ENCODE measurements at regions of chr1 and their contacts with region 1.

Region 1: DNA sequence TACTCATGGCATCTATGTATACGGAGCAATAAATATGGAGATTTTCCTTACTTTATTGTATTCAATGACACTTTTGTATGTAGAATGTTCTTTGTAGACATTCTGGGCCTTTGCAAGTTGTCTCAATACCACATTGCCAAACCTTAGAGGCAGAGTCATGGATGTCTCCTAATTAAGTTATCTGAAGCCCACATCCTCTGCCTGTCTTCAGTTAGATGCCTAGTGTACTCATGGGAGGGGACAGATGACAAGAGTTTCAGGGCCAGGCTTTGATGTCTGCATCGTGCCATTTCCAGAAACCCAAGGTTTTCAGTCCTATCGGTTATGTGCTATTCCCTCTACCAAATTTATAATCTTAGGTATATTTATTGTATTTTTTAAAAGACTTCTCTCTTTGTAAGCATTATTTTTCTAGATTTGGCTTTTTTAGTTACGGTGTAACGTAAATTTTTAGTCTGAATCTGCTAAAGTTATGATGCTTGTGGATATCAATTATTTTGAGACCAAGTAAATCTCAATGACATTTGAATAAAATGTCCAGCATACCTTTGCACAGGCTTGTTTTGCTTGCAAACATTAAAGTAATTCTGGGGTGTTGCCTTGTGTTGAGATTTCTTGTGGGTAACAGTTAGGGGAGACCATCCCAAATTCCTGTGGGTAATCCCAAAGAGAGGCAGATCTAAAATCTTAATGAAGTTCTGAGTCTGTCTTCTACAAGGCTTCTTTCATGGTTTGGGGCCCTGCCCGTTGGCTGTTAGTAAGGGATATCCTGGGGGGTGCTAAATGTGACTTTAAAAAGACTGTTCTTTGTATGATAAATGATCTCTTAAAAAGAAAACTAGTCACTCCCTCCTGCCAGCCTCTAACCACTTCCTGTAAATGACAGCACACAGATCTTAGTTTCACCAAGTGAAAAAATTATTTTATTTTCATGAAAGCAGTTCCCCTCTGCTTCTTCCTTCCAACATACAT is 8.0 kb upstream of the MACF1 start:
- DNase-seq: peak; percentile 73
- H3K4me3 Mint-ChIP-seq: peak overlapping the region; percentile 67
- H3K27ac Mint-ChIP-seq: peak overlapping the region; percentile 99
- H3K4me1 Mint-ChIP-seq: peaks cover 76% of the 10 kb centered on the region
- H3K27me3 Mint-ChIP-seq: no peaks in the 10 kb centered on the region

Region 2: GRCh38 chr1:39105061-39105840 is 91.3 kb before region 1 on chr1:
- CTCF ChIA-PET with region 1: interaction called, 71 read pairs
- POLR2A ChIA-PET with region 1: no interaction called
- DNase-seq: peak; percentile 70
- H3K4me3 Mint-ChIP-seq: peak overlapping the region; percentile 68
- H3K27ac Mint-ChIP-seq: no peak overlapping the region
- H3K4me1 Mint-ChIP-seq: peaks cover 34% of the 10 kb centered on the region
- H3K27me3 Mint-ChIP-seq: peaks cover 14% of the 10 kb centered on the region

Region 3: DNA sequence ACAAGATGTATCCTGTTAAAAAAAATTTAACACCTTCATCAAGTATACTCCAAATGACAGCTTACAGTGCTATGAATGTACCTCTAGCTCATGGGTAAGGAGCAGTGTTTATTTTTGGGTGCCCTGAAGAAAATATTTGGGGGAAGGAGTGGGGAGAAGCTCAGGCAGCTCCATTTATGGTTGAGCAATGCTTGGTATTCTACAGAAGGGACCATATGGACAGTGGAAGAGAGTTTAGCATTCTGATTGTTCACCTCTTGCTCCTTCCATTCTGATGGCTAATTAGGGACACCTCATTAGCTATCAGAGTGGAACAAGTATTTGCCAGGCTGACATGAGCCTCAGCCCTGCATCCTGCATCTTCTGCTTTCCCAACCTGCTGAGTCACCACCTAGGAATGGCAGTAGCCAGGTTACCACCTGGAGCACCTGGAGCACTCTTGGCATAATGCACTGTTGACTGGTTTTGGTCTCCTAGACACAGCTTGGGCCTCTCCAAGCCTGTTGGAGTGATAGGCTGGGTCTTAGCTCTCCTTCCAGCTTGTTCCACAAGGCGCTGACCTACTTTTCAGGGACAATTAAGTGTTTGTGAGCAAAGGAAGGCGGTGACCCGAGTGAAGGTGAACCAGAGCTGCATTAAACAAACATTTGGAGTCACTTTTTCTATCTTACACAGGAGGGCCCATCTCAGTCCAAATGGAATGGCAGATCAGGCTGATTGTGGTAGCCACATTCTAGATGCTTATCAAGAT is 54.0 kb before region 1 on chr1:
- CTCF ChIA-PET with region 1: no interaction called
- POLR2A ChIA-PET with region 1: no interaction called
- DNase-seq: no peak
- H3K4me3 Mint-ChIP-seq: no peak overlapping the region
- H3K27ac Mint-ChIP-seq: no peak overlapping the region
- H3K4me1 Mint-ChIP-seq: no peaks in the 10 kb centered on the region
- H3K27me3 Mint-ChIP-seq: peaks cover 10% of the 10 kb centered on the region

Region 4: GRCh38 chr1:39214998-39215873 is 18.7 kb after region 1 on chr1:
- CTCF ChIA-PET with region 1: interaction called, 150 read pairs
- POLR2A ChIA-PET with region 1: interaction called, 155 read pairs
- DNase-seq: peak; percentile 51
- H3K4me3 Mint-ChIP-seq: peak overlapping the region; percentile 93
- H3K27ac Mint-ChIP-seq: peak overlapping the region; percentile 85
- H3K4me1 Mint-ChIP-seq: peaks cover 58% of the 10 kb centered on the region
- H3K27me3 Mint-ChIP-seq: no peaks in the 10 kb centered on the region

Region 5: DNA sequence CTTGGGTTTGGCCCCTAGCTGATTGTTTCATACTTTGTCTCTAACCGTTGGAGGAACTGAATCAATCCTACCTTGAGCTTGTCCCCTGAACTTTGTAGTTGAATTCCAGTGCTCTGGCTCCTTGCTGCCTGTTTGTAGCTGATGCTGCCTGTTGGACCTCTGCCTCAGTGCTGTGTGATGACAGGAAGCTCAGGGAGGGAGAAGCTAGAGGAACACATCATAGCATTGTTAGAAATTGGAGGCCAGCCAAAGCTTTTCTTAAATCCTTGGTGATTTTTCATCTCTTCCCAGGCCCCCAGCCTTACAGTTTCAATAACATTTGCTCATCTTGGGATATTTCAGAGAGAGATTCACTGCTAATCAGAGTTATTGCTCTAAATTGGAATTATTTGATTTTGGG is 41.9 kb after region 1 on chr1:
- CTCF ChIA-PET with region 1: interaction called, 21 read pairs
- POLR2A ChIA-PET with region 1: interaction called, 9 read pairs
- DNase-seq: no peak
- H3K4me3 Mint-ChIP-seq: no peak overlapping the region
- H3K27ac Mint-ChIP-seq: peak overlapping the region; percentile 5
- H3K4me1 Mint-ChIP-seq: peaks cover 34% of the 10 kb centered on the region
- H3K27me3 Mint-ChIP-seq: no peaks in the 10 kb centered on the region

Region 6: DNA sequence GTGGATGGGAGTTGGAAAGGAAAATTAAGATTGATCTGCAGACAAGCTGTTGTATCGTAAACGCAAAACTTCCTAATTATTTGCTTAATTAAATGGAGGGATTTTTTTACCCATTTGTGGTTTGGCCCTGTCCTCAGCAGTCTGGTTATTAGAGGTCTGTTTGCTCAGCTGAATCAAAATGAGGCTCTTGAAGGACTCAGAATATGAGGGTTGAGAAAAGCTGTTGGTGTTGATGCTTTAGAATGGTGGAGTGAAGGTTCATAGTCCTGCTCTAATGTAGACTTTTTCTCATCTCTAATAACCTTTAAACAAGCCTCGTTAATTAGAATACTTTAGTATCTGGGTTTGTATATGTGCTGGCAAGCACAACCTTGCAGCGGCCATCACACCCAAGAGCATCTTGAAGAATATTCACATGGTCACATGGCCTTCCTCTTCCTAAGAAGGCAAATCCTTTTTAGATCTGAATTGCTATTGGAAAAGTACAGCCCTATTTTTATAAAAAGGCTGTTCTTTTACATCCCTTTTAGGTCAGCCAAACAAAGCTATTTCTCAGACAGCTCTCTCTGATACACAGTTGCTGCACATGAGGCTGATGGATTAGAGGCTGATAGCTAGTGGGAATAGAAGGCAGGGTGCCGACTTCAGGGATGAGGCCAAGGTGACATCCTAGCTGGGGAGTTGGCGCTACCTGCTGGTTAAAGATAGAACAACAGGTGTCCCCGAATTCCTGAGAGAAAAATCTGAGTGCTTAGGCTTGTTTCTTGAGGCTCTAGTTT is 61.8 kb after region 1 on chr1:
- CTCF ChIA-PET with region 1: interaction called, 184 read pairs
- POLR2A ChIA-PET with region 1: interaction called, 38 read pairs
- DNase-seq: peak; percentile 61
- H3K4me3 Mint-ChIP-seq: no peak overlapping the region
- H3K27ac Mint-ChIP-seq: peak overlapping the region; percentile 11
- H3K4me1 Mint-ChIP-seq: peaks cover 28% of the 10 kb centered on the region
- H3K27me3 Mint-ChIP-seq: no peaks in the 10 kb centered on the region

Region 7: DNA sequence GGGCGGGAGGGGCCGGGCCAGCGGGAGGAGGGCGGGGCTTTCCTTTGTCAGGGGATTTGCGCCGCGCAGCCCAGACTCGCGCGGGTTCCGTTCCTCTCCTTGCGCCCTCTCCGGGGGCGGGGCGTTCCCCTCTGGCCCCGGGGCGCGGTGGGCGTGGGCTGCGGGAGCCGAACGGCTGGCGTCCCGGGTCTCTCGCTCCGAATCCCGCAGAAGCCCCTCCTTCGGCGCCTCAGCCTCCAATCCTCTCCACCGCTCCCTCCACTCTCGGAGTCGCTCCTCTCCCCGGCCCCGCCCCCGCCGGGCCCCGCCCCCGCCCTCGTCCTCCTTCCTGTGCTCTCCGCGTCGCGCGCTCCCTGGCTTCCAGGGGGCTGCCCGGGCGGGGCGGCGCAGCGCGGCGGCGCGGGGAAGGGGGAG is 212.1 kb after region 1 on chr1:
- CTCF ChIA-PET with region 1: interaction called, 16 read pairs
- POLR2A ChIA-PET with region 1: no interaction called
- DNase-seq: peak; percentile 83
- H3K4me3 Mint-ChIP-seq: peak overlapping the region; percentile 81
- H3K27ac Mint-ChIP-seq: no peak overlapping the region
- H3K4me1 Mint-ChIP-seq: peaks cover 57% of the 10 kb centered on the region
- H3K27me3 Mint-ChIP-seq: no peaks in the 10 kb centered on the region